Stomach (tissue), 19 donors: ENCODE measurements at regions of chr2 and their contacts with region 1.

Region 1: DNA sequence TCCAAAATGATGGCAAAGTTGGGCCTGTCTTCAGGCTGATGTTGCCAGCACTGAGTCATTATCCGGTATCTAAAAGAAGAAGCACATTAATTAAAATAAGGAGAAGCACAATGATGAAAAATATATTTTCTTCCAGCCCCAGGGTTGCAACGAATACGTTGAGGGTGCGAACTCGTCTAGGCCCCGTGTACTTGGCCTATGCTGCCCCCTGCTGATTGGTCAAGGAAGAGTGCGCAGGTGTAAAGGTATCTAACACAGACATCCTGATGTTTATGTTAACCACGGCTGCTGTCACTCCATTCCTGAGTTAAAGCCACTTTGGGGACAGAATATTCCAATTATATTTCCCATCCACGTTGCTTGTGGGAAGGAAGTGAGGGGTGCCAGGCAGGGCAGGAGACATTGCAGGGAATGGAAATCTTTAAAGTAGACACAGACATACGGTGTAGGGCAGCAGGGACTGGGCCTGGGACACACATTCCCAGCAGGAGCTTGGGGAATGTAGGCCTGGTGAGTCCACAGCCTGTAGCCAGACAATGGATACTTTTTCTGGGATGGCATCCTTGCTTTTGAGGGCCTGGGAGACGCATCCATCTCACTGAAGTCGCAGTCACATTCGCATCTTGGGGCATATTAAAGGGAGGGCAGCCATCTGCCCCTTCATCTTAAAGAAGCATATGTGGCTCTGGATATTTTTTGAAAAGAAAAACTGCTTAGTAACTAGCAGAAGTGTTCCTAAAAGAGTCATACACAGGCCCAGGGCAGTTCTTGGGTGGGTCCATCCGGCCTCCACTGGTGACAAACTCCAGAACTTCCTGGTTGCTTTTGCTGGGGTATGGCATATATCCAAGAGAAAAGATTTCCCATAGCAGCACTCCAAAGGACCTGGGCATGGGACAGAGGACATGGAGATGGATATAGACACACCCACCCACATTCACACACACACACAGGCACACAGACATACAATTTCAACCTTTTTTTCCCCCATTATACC is 81.9 kb downstream of the CLIP4 start:
- DNase-seq: peak; percentile 76 to 88
- H3K4me3 ChIP-seq: no peak overlapping the region
- H3K27ac ChIP-seq: no peak overlapping the region
- H3K4me1 ChIP-seq: peaks cover 0 to 13% (median 5%) of the 10 kb centered on the region in 4 donors
- H3K27me3 ChIP-seq: no peaks in the 10 kb centered on the region
- CTCF ChIP-seq: peak in 5 of 7 experiments; percentile 63 to 76 (median 72)
- EP300 ChIP-seq: no peak
- POLR2A ChIP-seq: no peak

Region 2: DNA sequence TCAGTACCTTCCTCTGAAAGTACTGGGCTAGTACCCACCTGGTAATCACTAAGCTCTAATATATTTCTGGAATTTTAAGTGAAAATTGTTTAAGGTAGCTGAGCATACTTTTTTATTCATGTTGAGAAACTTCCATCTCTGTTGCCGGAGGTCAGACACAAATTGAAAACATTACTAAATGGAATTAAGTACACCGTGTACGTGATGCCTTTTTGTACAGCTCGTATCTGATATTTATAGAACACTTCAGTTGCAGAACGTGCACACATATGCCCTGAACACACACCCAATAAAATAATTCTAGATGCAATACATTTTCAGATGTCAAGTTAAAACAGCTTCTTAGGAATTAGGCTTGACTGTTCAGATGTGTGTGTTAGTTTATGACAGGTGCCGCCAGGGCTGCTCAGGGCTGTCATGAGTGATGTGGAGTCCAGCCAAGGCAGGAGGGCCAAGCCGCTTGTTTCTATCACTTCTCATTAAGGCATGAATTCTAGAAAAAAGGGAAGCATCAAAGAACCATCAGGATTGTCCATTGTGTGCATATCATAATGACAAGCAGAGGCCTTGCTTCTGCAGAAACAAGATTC is 885.3 kb before region 1 on chr2:
- intact Hi-C with region 1: no loop called
- DNase-seq: no peak
- H3K4me3 ChIP-seq: no peak overlapping the region
- H3K27ac ChIP-seq: no peak overlapping the region
- H3K4me1 ChIP-seq: peaks cover 0 to under 1% (median 0%) of the 10 kb centered on the region in 4 donors
- H3K27me3 ChIP-seq: no peaks in the 10 kb centered on the region
- CTCF ChIP-seq: no peak
- EP300 ChIP-seq: no peak
- POLR2A ChIP-seq: no peak

Region 3: GRCh38 chr2:28821295-28821958 is 375.7 kb before region 1 on chr2:
- intact Hi-C with region 1: loop called (anchors 10 kb)
- DNase-seq: peak; percentile 46 to 81
- H3K4me3 ChIP-seq: no peak overlapping the region
- H3K27ac ChIP-seq: no peak overlapping the region
- H3K4me1 ChIP-seq: peaks cover 0 to 6% (median 3%) of the 10 kb centered on the region in 4 donors
- H3K27me3 ChIP-seq: peaks cover 0 to 7% (median 0%) of the 10 kb centered on the region in 3 donors
- CTCF ChIP-seq: peak in 5 of 7 experiments; percentile 53 to 72 (median 63)
- EP300 ChIP-seq: no peak
- POLR2A ChIP-seq: no peak

Region 4: GRCh38 chr2:28958689-28959088 is 238.4 kb before region 1 on chr2:
- intact Hi-C with region 1: loop called (anchors 5 kb)
- DNase-seq: peak in 1 of 2 donors; percentile 88
- H3K4me3 ChIP-seq: no peak overlapping the region
- H3K27ac ChIP-seq: no peak overlapping the region
- H3K4me1 ChIP-seq: peaks cover 0 to 14% (median 7%) of the 10 kb centered on the region in 4 donors
- H3K27me3 ChIP-seq: no peaks in the 10 kb centered on the region
- CTCF ChIP-seq: peak in 5 of 7 experiments; percentile 35 to 79 (median 69)
- EP300 ChIP-seq: no peak
- POLR2A ChIP-seq: no peak

Region 5: GRCh38 chr2:29113891-29114321 is 83.2 kb before region 1 on chr2:
- intact Hi-C with region 1: no loop called
- DNase-seq: peak; percentile 46 to 54
- H3K4me3 ChIP-seq: no peak overlapping the region
- H3K27ac ChIP-seq: peak overlapping the region in 3 of 5 donors; percentile 79 to 94 (median 93)
- H3K4me1 ChIP-seq: peaks cover 8 to 43% (median 20%) of the 10 kb centered on the region in 4 donors
- H3K27me3 ChIP-seq: peaks cover 0 to 19% (median 3%) of the 10 kb centered on the region in 3 donors
- CTCF ChIP-seq: no peak
- EP300 ChIP-seq: no peak
- POLR2A ChIP-seq: no peak